CD14-positive monocyte (primary cell): ENCODE measurements at regions of chr1 and their contacts with region 1.

Region 1: DNA sequence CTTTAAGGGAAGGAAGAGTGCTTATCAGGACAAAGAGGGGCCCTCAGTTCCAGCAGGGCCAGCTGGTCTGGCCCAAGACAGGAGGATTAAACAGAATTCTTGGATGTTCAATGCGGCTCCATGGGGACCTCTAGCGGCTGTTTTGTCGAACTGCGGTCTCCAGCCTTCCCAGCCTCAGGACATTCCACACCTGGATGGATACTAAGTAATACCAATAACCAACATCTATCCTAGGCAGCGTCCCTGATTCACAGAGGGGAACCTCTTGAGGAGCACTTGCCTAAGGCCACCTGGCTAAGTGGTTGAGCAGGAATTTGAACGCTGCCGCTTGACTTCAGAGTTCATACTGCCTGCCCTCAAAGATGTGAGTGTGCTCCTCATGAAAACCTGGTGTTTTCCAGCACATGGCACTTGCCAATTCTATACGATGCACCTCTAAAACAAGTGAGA is 15.5 kb upstream of the CD247 start:
- DNase-seq: peak; percentile 28 to 62 (median 51)
- H3K4me3 ChIP-seq: no peak overlapping the region
- H3K4me3 Mint-ChIP-seq: no peak overlapping the region
- H3K27ac ChIP-seq: no peak overlapping the region
- H3K27ac Mint-ChIP-seq: no peak overlapping the region
- H3K4me1 ChIP-seq: peaks cover 0 to 8% of the 10 kb centered on the region in 2 donors
- H3K4me1 Mint-ChIP-seq: peaks cover 10% of the 10 kb centered on the region
- H3K27me3 ChIP-seq: no peaks in the 10 kb centered on the region
- H3K27me3 Mint-ChIP-seq: peaks cover 0 to 2% (median 1%) of the 10 kb centered on the region in 3 donors
- CTCF ChIP-seq: peak; percentile 95

Region 2: GRCh38 chr1:166627558-166627957 is 906.3 kb before region 1 on chr1:
- intact Hi-C with region 1: no loop called
- DNase-seq: no peak
- H3K4me3 ChIP-seq: no peak overlapping the region
- H3K4me3 Mint-ChIP-seq: no peak overlapping the region
- H3K27ac ChIP-seq: no peak overlapping the region
- H3K27ac Mint-ChIP-seq: no peak overlapping the region
- H3K4me1 ChIP-seq: no peaks in the 10 kb centered on the region
- H3K4me1 Mint-ChIP-seq: no peaks in the 10 kb centered on the region
- H3K27me3 ChIP-seq: no peaks in the 10 kb centered on the region
- H3K27me3 Mint-ChIP-seq: peaks cover 0 to 5% (median 2%) of the 10 kb centered on the region in 3 donors
- CTCF ChIP-seq: no peak

Region 3: GRCh38 chr1:167066333-167067122 is 467.3 kb before region 1 on chr1:
- intact Hi-C with region 1: loop called (anchors 5 to 10 kb)
- DNase-seq: peak; percentile 52 to 71 (median 65)
- H3K4me3 ChIP-seq: peak overlapping the region in 1 of 3 experiments; percentile 12
- H3K4me3 Mint-ChIP-seq: peak overlapping the region; percentile 40 to 80
- H3K27ac ChIP-seq: no peak overlapping the region
- H3K27ac Mint-ChIP-seq: peak overlapping the region in 2 of 7 donors; percentile 5 to 38
- H3K4me1 ChIP-seq: peaks cover 3 to 7% of the 10 kb centered on the region in 2 donors
- H3K4me1 Mint-ChIP-seq: peaks cover 7% of the 10 kb centered on the region
- H3K27me3 ChIP-seq: no peaks in the 10 kb centered on the region
- H3K27me3 Mint-ChIP-seq: peaks cover 0 to 7% (median 3%) of the 10 kb centered on the region in 3 donors
- CTCF ChIP-seq: peak; percentile 98

Region 4: GRCh38 chr1:167273027-167273800 is 260.7 kb before region 1 on chr1:
- intact Hi-C with region 1: loop called (anchors 5 to 10 kb)
- DNase-seq: no peak
- H3K4me3 ChIP-seq: no peak overlapping the region
- H3K4me3 Mint-ChIP-seq: peak overlapping the region in 1 of 2 donors; percentile 28
- H3K27ac ChIP-seq: no peak overlapping the region
- H3K27ac Mint-ChIP-seq: peak overlapping the region in 1 of 7 donors; percentile 16
- H3K4me1 ChIP-seq: peaks cover 9 to 14% of the 10 kb centered on the region in 2 donors
- H3K4me1 Mint-ChIP-seq: peaks cover 52% of the 10 kb centered on the region
- H3K27me3 ChIP-seq: no peaks in the 10 kb centered on the region
- H3K27me3 Mint-ChIP-seq: no peaks in the 10 kb centered on the region
- CTCF ChIP-seq: no peak

Region 5: DNA sequence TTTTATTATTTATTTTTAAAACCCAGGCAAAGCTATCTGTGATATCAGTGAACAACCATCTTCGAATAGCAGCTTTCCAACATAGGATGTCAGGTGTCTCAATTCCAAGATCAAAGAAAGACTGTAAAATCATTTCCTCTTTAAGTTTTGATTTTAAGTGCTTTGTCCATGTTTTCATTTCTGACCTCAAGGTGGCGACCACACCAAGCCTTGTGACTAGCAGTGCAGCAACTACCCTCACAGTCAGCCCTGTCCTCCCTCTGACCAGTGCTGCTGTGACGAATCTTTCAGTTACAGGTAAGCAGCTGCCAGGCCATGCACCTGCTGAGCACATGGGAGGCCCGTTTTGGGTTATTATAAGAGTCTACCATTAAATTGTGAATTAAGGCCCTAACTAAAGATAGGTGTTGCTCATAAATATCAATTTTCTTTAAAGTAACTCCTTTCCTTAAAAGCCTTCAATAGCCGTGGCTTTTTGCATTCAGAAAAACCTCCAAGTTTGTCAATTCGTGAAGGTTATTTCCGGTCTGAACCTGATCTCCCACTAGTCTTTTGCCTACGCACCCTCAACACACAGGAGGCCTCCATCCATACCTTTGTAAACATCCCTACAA is 132.5 kb before region 1 on chr1:
- intact Hi-C with region 1: loop called (anchors 10 kb)
- DNase-seq: peak; percentile 23 to 47 (median 26)
- H3K4me3 ChIP-seq: no peak overlapping the region
- H3K4me3 Mint-ChIP-seq: no peak overlapping the region
- H3K27ac ChIP-seq: no peak overlapping the region
- H3K27ac Mint-ChIP-seq: no peak overlapping the region
- H3K4me1 ChIP-seq: no peaks in the 10 kb centered on the region
- H3K4me1 Mint-ChIP-seq: no peaks in the 10 kb centered on the region
- H3K27me3 ChIP-seq: no peaks in the 10 kb centered on the region
- H3K27me3 Mint-ChIP-seq: no peaks in the 10 kb centered on the region
- CTCF ChIP-seq: peak; percentile 74

Region 6: DNA sequence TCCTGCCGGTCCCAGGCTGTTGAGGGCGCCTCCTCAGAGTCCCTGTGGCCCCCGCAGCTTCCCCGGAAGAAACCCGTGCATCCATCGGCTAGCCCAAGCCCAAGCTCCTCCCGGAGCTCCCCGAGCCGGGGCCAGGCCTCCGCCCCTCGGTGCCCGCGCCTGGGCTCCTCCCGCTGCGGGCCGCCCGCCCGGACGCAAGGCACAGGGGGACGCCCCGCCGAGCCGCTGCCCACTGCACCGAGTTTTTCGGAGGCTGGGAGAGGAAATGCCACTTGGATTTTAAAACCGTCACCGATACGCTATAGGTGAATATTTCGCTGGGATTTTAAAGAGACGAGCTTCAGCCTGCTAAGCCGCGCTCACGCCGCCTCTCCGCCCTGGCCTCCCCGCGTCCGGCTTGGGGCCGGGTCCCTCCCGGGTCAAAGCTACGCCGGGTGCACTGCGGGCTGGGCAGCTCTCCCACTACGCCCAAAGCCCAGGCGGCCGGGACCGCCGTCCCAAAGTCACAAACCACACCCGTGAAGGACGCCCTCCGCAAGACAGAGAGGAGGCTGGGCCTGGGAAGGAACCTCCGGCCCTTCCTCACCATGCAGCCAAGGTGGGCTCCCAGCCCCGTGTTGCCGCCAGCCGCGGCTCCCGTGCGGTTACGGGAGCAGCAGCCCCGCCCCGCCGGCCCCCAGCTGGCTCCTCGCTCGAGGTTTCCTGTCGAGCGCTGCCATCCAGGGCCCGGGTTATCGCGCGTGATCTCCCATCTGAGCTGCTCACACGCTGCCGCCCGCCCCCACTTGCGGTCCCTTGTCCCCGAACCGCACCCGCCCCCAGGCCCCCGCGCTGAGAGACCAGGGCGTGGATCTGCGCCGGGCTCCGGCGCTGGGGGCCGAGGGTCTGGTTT is 78.7 kb before region 1 on chr1:
- intact Hi-C with region 1: loop called in 1 of 2 experiments (anchors 10 kb)
- DNase-seq: peak in 2 of 3 donors; percentile 31 to 41
- H3K4me3 ChIP-seq: peak overlapping the region; percentile 51 to 92 (median 71)
- H3K4me3 Mint-ChIP-seq: peak overlapping the region; percentile 85 to 92
- H3K27ac ChIP-seq: peak overlapping the region in 1 of 2 donors; percentile 45
- H3K27ac Mint-ChIP-seq: no peak overlapping the region
- H3K4me1 ChIP-seq: peaks cover 5 to 6% of the 10 kb centered on the region in 2 donors
- H3K4me1 Mint-ChIP-seq: peaks cover 11% of the 10 kb centered on the region
- H3K27me3 ChIP-seq: peaks cover 0 to 13% of the 10 kb centered on the region in 2 donors
- H3K27me3 Mint-ChIP-seq: peaks cover 15 to 32% (median 19%) of the 10 kb centered on the region in 3 donors
- CTCF ChIP-seq: no peak

Region 7: DNA sequence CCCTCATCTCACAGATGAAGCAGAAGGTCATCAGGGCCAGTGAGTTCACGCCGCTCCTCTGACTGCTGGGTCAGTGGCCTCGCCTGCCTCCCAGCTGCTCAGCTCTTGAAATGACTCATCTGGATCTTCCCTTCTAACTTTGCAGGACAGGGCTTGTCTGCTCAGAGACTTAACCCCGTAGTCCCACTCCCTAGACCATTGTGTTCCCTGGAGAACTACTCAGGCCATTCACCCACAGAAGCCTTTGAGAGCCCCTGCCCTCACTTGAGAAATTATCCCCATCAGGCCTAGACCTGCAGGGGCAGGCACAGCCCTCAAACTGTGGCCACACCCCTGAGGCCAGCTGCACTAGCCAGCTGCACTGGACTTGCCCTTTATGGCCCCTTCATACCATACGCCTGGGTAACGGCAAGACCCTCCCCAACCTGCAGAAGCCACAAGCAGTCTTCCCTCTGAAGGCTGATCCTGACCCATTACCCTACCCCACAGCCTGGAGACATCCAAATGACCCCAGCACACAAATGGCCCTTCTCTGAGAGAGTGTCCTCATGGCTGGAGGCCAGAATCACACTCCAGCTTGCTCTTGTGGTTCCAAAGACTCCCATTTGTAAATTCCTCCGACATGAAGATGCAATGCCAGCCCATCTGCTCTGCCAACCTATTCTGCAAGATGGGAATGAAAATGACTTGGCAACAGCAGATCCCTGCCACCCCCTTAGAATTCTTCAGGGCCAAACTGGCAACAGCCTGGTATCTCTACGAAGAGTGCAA is 129.3 kb after region 1 on chr1:
- intact Hi-C with region 1: no loop called
- DNase-seq: peak in 1 of 3 donors; percentile 29
- H3K4me3 ChIP-seq: no peak overlapping the region
- H3K4me3 Mint-ChIP-seq: no peak overlapping the region
- H3K27ac ChIP-seq: peak overlapping the region in 1 of 2 donors; percentile 54
- H3K27ac Mint-ChIP-seq: peak overlapping the region in 6 of 7 donors; percentile 3 to 85 (median 64)
- H3K4me1 ChIP-seq: peaks cover 43 to 60% of the 10 kb centered on the region in 2 donors
- H3K4me1 Mint-ChIP-seq: peaks cover 85% of the 10 kb centered on the region
- H3K27me3 ChIP-seq: no peaks in the 10 kb centered on the region
- H3K27me3 Mint-ChIP-seq: no peaks in the 10 kb centered on the region
- CTCF ChIP-seq: no peak

Region 8: DNA sequence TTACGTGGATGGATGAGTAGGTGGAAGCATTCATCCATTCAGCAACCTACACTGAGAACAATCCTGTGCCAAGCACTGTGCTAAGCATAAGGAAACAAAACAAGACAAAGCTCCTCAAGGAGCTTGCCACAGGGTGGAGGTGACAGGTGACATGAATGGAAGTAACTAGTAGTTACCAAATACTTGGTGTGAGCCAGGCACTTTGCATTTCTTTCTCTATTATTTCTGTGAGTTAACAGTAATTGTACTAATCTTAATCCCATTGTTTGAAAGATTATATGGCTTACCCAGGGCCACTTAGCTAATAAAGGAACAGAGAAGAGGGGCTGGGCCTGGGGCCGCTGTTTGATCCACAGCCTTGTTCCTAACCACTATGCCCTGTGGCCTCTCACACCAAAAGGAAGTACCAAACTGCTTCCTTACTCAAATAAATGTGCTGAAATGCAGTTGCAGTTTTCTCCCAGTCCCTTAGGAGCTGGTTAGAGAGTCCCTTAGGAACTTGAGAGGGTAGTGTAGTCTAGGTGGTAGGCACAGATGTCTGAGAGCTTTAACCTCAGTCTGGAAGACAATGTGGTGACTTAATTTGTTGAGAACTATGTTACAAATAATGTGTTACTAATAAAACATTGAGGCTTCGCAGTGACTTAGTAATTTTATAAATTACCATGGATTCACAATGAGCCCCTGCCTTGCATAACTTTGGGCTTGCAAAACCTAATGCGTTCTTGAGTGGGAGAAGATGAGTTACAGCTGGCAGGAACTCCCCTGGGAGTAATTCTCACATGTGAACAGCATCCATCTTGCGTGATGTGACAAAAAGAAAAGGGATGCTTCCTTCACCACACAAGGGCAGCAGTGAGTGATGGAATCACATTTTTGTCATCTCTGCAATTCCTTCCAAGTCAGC is 257.7 kb after region 1 on chr1:
- intact Hi-C with region 1: no loop called
- DNase-seq: peak; percentile 51 to 91 (median 52)
- H3K4me3 ChIP-seq: no peak overlapping the region
- H3K4me3 Mint-ChIP-seq: no peak overlapping the region
- H3K27ac ChIP-seq: peak overlapping the region; percentile 22 to 72
- H3K27ac Mint-ChIP-seq: peak overlapping the region; percentile 43 to 88 (median 82)
- H3K4me1 ChIP-seq: peaks cover 14 to 16% of the 10 kb centered on the region in 2 donors
- H3K4me1 Mint-ChIP-seq: peaks cover 18% of the 10 kb centered on the region
- H3K27me3 ChIP-seq: no peaks in the 10 kb centered on the region
- H3K27me3 Mint-ChIP-seq: no peaks in the 10 kb centered on the region
- CTCF ChIP-seq: no peak